ENCODE measurements at regions of chr14 and their contacts with region 1.

Region 1: GRCh38 chr14:71320107-71320733 is 413.0 kb downstream of the PCNX1 start:
- DNase-seq: peak; percentile 99
- H3K4me3 Mint-ChIP-seq: peak within 1 kb of the TSS; percentile 83
- H3K27ac Mint-ChIP-seq: peak within 1 kb of the TSS; percentile 71
- H3K4me1 Mint-ChIP-seq: peaks cover 39% of the 10 kb centered on the region
- H3K27me3 Mint-ChIP-seq: no peaks in the 10 kb centered on the region

Region 2: DNA sequence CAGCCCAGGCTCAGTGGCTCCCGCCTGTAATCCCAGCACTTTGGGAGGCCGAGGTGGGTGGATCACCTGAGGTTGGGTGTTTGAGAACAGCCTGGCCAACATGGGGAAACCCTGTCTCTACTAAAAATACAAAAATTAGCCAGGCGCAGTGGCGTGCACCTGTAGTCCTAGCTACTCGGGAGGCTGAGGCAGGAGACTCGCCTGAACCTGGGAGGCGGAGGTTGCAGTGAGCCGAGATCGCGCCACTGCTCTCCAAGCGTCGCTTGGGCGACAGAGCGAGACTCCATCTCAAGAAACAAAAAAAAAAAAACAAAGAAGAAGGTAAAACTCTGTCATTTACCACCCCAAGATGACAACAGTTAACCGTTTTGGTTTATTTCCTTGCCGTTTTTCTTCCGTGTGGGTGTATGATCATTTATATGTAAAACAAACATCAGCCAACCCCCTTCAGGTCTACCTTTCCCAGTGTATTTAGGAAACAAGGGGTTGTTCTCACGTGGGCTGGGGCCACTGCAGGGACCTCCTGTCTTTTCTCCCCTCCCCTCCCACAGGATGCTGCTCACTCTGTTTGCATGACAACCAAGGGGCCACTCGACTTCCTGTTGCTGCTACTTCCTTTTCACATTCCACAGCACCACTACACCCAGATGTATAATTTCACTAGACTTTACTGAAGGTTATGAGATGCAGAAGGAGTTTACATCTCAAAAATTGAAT is 665.0 kb before region 1 on chr14:
- CTCF ChIA-PET with region 1: no interaction called
- intact Hi-C with region 1: loop called (anchors 10 kb)
- DNase-seq: peak; percentile 92
- H3K4me3 Mint-ChIP-seq: peak overlapping the region; percentile 83
- H3K27ac Mint-ChIP-seq: peak overlapping the region; percentile 98
- H3K4me1 Mint-ChIP-seq: peaks cover 81% of the 10 kb centered on the region
- H3K27me3 Mint-ChIP-seq: no peaks in the 10 kb centered on the region

Region 3: GRCh38 chr14:70685474-70686197 is 634.6 kb before region 1 on chr14:
- CTCF ChIA-PET with region 1: no interaction called
- intact Hi-C with region 1: no loop called
- DNase-seq: no peak
- H3K4me3 Mint-ChIP-seq: no peak overlapping the region
- H3K27ac Mint-ChIP-seq: no peak overlapping the region
- H3K4me1 Mint-ChIP-seq: no peaks in the 10 kb centered on the region
- H3K27me3 Mint-ChIP-seq: no peaks in the 10 kb centered on the region

Region 4: GRCh38 chr14:70907176-70907995 is 412.8 kb before region 1 on chr14 and contains the start of gene PCNX1:
- CTCF ChIA-PET with region 1: no interaction called
- intact Hi-C with region 1: loop called (anchors 5 kb)
- DNase-seq: peak; percentile 87
- H3K4me3 Mint-ChIP-seq: peak within 1 kb of the TSS; percentile 81
- H3K27ac Mint-ChIP-seq: peak within 1 kb of the TSS; percentile 91
- H3K4me1 Mint-ChIP-seq: peaks cover 74% of the 10 kb centered on the region
- H3K27me3 Mint-ChIP-seq: no peaks in the 10 kb centered on the region
- total RNA-seq, gene PCNX1: 51.9 to 63.1 TPM

Region 5: DNA sequence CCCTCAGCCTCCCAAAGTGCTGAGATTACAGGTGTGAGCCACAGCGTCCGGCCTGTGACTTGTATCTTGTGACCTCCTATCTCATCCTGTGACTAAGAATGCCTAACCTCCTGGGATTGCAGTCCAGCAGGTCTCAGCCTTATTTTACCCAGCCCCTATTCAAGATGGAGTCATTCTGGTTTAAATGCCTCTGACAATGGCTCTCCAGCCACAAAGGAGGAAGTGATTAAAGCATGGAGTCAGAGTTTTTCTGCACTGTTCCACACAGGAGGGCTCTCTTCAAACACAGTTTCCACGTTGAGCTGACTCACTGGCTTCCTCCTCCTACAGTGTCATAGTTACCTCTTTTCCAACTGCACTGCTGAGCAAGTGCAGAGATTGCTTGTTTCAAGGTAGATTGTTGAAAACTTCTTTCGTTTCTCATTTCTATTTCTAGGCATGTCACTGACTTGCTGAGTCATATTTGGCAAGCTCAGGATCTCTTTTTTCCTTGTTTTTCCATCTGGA is 29.2 kb before region 1 on chr14:
- CTCF ChIA-PET with region 1: no interaction called
- intact Hi-C with region 1: loop called (anchors 2 kb)
- DNase-seq: peak; percentile 67
- H3K4me3 Mint-ChIP-seq: no peak overlapping the region
- H3K27ac Mint-ChIP-seq: no peak overlapping the region
- H3K4me1 Mint-ChIP-seq: peaks cover 16% of the 10 kb centered on the region
- H3K27me3 Mint-ChIP-seq: no peaks in the 10 kb centered on the region

Region 6: DNA sequence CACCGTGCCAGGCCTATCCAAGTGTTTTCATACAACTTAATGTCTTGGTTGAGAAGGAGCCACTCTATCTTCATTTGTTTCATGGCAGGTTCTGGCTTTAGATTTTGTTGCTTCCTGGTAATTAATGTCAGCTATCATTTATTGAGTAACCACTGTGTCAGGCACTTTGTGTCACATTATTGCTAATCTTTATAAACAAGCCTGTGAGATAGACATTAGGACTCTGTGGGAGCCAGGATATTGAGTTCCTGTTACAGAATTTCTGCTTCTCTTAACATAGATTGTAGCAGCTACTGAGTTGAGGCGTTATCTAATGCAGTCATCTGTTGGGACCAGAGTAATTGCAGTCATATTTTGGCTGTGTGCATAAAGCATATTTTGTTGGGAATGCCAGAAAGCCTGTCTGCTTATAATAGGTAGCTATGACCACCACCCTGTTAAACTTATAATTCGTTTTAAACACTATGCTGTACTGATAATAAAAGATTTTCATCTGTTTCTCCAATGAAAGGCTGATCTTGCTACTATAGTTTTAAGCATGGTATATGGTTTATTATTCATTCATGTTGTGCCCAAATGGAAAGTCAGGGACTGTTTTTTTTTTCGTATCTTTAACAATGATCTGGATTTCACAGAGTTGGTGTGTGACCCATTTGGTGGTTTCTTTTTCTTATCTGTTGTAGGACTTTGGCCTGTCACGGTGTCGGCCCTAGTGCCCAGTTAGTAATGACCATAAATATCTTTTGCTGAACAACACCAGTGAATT is 19.6 kb after region 1 on chr14:
- CTCF ChIA-PET with region 1: no interaction called
- intact Hi-C with region 1: no loop called
- DNase-seq: no peak
- H3K4me3 Mint-ChIP-seq: no peak overlapping the region
- H3K27ac Mint-ChIP-seq: no peak overlapping the region
- H3K4me1 Mint-ChIP-seq: peaks cover 3% of the 10 kb centered on the region
- H3K27me3 Mint-ChIP-seq: no peaks in the 10 kb centered on the region

Region 7: GRCh38 chr14:71403656-71404055 is 83.4 kb after region 1 on chr14:
- CTCF ChIA-PET with region 1: interaction called, 7 read pairs
- intact Hi-C with region 1: loop called (anchors 1 kb)
- DNase-seq: peak; percentile 31
- H3K4me3 Mint-ChIP-seq: no peak overlapping the region
- H3K27ac Mint-ChIP-seq: no peak overlapping the region
- H3K4me1 Mint-ChIP-seq: peaks cover 29% of the 10 kb centered on the region
- H3K27me3 Mint-ChIP-seq: no peaks in the 10 kb centered on the region

Region 8: GRCh38 chr14:71591929-71592328 is 271.7 kb after region 1 on chr14:
- CTCF ChIA-PET with region 1: no interaction called
- intact Hi-C with region 1: loop called (anchors 2 kb)
- DNase-seq: peak; percentile 62
- H3K4me3 Mint-ChIP-seq: no peak overlapping the region
- H3K27ac Mint-ChIP-seq: peak overlapping the region; percentile 8
- H3K4me1 Mint-ChIP-seq: peaks cover 54% of the 10 kb centered on the region
- H3K27me3 Mint-ChIP-seq: no peaks in the 10 kb centered on the region

Region 9: GRCh38 chr14:71753126-71753830 is 433.1 kb after region 1 on chr14:
- CTCF ChIA-PET with region 1: interaction called, 4 read pairs
- intact Hi-C with region 1: loop called (anchors 1 kb)
- DNase-seq: peak; percentile 81
- H3K4me3 Mint-ChIP-seq: no peak overlapping the region
- H3K27ac Mint-ChIP-seq: no peak overlapping the region
- H3K4me1 Mint-ChIP-seq: no peaks in the 10 kb centered on the region
- H3K27me3 Mint-ChIP-seq: no peaks in the 10 kb centered on the region

Measured in activated naive CD4-positive, alpha-beta T cell treated with anti-CD3 and anti-CD28 coated beads for 36 hours (primary cell).